Endothelial cell of umbilical vein (primary cell): ENCODE measurements at regions of chr12 and their contacts with region 1.

Region 1: GRCh38 chr12:124694846-124695497 is 127.6 kb upstream of the NCOR2 start:
- DNase-seq: peak; percentile 90
- H3K4me3 ChIP-seq: no peak overlapping the region
- H3K27ac ChIP-seq: peak overlapping the region; percentile 65
- H3K4me1 ChIP-seq: peaks cover 15% of the 10 kb centered on the region
- H3K27me3 ChIP-seq: peaks cover 0 to 1% of the 10 kb centered on the region in 2 experiments
- CTCF ChIP-seq: peak in 1 of 2 donors; percentile 13
- POLR2A ChIP-seq: no peak

Region 2: GRCh38 chr12:123808167-123808566 is 886.8 kb before region 1 on chr12:
- CTCF ChIA-PET with region 1: no interaction called
- POLR2A ChIA-PET with region 1: no interaction called
- dilution Hi-C with region 1: no loop called
- intact Hi-C with region 1: no loop called
- DNase-seq: no peak
- H3K4me3 ChIP-seq: no peak overlapping the region
- H3K27ac ChIP-seq: no peak overlapping the region
- H3K4me1 ChIP-seq: no peaks in the 10 kb centered on the region
- H3K27me3 ChIP-seq: peaks cover 1 to 8% of the 10 kb centered on the region in 2 experiments
- CTCF ChIP-seq: peak in 1 of 2 donors; percentile 23
- POLR2A ChIP-seq: no peak

Region 3: GRCh38 chr12:124625867-124626675 is 68.9 kb before region 1 on chr12:
- CTCF ChIA-PET with region 1: interaction called, 5 read pairs
- POLR2A ChIA-PET with region 1: interaction called, 3 read pairs
- dilution Hi-C with region 1: no loop called
- intact Hi-C with region 1: loop called (anchors 2 kb)
- DNase-seq: peak; percentile 91
- H3K4me3 ChIP-seq: no peak overlapping the region
- H3K27ac ChIP-seq: peak overlapping the region; percentile 91
- H3K4me1 ChIP-seq: peaks cover 26% of the 10 kb centered on the region
- H3K27me3 ChIP-seq: no peaks in the 10 kb centered on the region
- CTCF ChIP-seq: no peak
- POLR2A ChIP-seq: peak; percentile 51

Region 4: GRCh38 chr12:124655698-124656516 is 39.1 kb before region 1 on chr12:
- CTCF ChIA-PET with region 1: interaction called, 7 read pairs
- POLR2A ChIA-PET with region 1: no interaction called
- dilution Hi-C with region 1: no loop called
- intact Hi-C with region 1: loop called (anchors 1 kb)
- DNase-seq: peak; percentile 87
- H3K4me3 ChIP-seq: no peak overlapping the region
- H3K27ac ChIP-seq: peak overlapping the region; percentile 91
- H3K4me1 ChIP-seq: peaks cover 51% of the 10 kb centered on the region
- H3K27me3 ChIP-seq: no peaks in the 10 kb centered on the region
- CTCF ChIP-seq: no peak
- POLR2A ChIP-seq: no peak

Region 5: DNA sequence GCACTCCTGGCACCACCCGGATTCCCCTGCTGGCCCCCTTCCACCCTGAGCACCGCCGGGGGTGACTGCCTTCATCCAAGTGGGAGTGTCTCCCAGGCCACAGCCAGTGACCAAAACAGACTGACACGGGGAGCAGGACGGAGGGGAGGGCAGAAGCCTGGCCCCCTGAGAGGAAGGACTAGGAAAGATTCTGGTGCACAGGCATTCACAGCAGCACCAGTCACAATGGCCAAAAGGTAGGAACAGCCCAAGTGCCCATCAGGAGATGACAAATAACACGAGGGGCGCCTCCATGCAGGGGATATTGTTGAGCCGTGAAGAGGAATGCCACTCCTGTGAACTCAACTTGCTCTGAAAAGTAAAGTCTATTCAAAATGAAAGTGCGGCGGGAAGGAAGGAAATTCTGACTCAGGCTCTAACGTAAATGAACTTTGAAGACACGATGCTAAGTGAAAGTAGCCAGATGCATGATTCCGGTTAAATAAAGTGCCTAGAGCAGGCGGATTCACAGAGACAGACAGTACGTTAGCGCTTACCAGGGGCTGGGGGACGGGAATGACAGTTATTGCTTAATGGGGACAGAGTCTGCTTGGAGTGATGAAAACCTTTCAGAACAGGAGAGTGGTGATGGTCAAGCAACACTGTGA is 18.6 kb after region 1 on chr12:
- CTCF ChIA-PET with region 1: interaction called, 6 read pairs
- POLR2A ChIA-PET with region 1: no interaction called
- dilution Hi-C with region 1: no loop called
- intact Hi-C with region 1: loop called (anchors 1 kb)
- DNase-seq: peak; percentile 96
- H3K4me3 ChIP-seq: peak overlapping the region in 1 of 3 experiments; percentile 9
- H3K27ac ChIP-seq: peak overlapping the region; percentile 94
- H3K4me1 ChIP-seq: peaks cover 24% of the 10 kb centered on the region
- H3K27me3 ChIP-seq: no peaks in the 10 kb centered on the region
- CTCF ChIP-seq: no peak
- POLR2A ChIP-seq: peak; percentile 35

Region 6: DNA sequence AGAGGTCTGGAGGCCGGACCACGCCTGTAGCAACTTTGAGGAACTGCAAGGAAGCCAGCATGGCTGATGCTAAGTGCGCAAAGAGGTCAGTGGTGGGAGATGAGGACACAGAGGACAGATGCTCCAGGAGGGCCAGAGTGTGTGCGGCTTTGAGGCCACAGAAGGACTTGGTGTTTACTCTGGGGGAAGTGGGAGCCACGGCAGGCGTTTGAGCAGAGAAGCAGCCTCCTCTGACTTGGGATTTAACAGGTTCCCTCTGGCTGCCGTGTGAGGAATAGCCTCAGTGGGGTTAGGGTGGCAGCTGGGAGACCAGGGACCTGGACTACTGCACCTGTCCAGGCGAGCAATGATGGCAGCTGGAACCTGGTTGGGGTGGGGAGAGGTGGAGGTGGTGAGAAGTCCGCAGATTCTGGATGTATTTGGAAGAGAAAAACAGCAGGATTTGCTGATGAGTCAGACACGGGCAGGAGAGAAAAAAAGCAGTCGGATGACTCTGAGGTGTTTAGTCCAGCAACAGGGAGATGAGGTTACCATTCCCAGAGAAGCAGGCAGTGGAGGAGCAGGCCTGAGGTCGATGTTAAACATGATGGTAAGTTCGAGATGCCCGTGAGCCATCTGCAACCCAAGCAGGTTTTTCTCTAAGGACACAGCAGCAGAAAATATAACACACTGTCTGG is 25.2 kb after region 1 on chr12:
- CTCF ChIA-PET with region 1: interaction called, 3 read pairs
- POLR2A ChIA-PET with region 1: interaction called, 4 read pairs
- dilution Hi-C with region 1: no loop called
- intact Hi-C with region 1: loop called (anchors 1 kb)
- DNase-seq: peak; percentile 72
- H3K4me3 ChIP-seq: no peak overlapping the region
- H3K27ac ChIP-seq: peak overlapping the region; percentile 80
- H3K4me1 ChIP-seq: peaks cover 27% of the 10 kb centered on the region
- H3K27me3 ChIP-seq: no peaks in the 10 kb centered on the region
- CTCF ChIP-seq: peak; percentile 20 to 38
- POLR2A ChIP-seq: no peak

Region 7: GRCh38 chr12:124740691-124741137 is 45.7 kb after region 1 on chr12:
- CTCF ChIA-PET with region 1: interaction called, 5 read pairs
- POLR2A ChIA-PET with region 1: interaction called, 3 read pairs
- dilution Hi-C with region 1: no loop called
- intact Hi-C with region 1: loop called (anchors 1 kb)
- DNase-seq: peak; percentile 87
- H3K4me3 ChIP-seq: no peak overlapping the region
- H3K27ac ChIP-seq: peak overlapping the region; percentile 88
- H3K4me1 ChIP-seq: peaks cover 42% of the 10 kb centered on the region
- H3K27me3 ChIP-seq: no peaks in the 10 kb centered on the region
- CTCF ChIP-seq: peak; percentile 7 to 13
- POLR2A ChIP-seq: no peak